BJ (cell line): ENCODE measurements at regions of chr5 and their contacts with region 1.

Region 1: GRCh38 chr5:37667846-37668245 is 172.0 kb downstream of the GDNF start:
- DNase-seq: no peak
- H3K4me3 ChIP-seq: no peak overlapping the region
- H3K27me3 ChIP-seq: no peaks in the 10 kb centered on the region
- CTCF ChIP-seq: no peak

Region 2: GRCh38 chr5:37657046-37657445 is 10.8 kb before region 1 on chr5:
- CTCF ChIA-PET with region 1: no interaction called
- POLR2A ChIA-PET with region 1: no interaction called
- DNase-seq: no peak
- H3K4me3 ChIP-seq: no peak overlapping the region
- H3K27me3 ChIP-seq: no peaks in the 10 kb centered on the region
- CTCF ChIP-seq: no peak

Region 3: DNA sequence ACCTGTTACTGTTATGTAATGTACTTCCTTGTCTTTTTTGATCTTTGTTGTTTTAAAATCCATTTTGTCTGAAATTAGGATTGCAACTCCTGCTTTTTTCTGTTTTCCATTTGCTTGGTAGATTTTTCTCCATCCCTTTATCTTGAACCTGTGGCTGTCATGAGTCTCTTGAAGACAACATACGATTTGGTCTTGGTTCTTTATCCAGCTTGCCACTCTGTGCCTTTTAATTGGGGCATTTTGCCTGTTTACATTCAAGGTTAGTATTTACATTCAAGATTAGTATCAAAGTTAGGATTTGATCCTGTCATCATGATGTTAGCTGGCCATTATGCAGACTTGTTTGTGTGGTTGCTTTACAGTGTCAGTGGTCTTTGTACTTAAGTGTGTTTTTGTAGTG is 15.2 kb after region 1 on chr5:
- CTCF ChIA-PET with region 1: no interaction called
- POLR2A ChIA-PET with region 1: no interaction called
- DNase-seq: no peak
- H3K4me3 ChIP-seq: no peak overlapping the region
- H3K27me3 ChIP-seq: no peaks in the 10 kb centered on the region
- CTCF ChIP-seq: no peak

Region 4: DNA sequence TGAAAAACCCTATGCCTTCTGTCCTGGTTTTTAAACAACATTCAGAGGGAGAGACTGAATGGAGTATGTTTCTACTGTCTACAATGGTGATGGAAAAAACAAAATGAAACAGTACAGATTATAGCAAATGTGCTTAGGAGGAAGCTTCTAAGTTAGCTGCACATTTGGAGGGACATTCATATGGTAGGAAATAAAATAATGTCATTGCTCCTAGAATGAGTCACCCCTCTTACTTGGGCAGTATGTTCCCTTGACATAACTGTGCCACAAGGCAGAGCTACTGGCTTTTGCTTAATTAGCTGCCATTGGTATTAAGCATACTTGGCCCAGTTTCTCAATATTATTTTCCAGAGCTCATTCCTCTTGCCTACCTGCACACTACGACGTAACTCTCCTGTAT is 43.1 kb after region 1 on chr5:
- CTCF ChIA-PET with region 1: no interaction called
- POLR2A ChIA-PET with region 1: no interaction called
- DNase-seq: no peak
- H3K4me3 ChIP-seq: no peak overlapping the region
- H3K27me3 ChIP-seq: no peaks in the 10 kb centered on the region
- CTCF ChIP-seq: no peak

Region 5: DNA sequence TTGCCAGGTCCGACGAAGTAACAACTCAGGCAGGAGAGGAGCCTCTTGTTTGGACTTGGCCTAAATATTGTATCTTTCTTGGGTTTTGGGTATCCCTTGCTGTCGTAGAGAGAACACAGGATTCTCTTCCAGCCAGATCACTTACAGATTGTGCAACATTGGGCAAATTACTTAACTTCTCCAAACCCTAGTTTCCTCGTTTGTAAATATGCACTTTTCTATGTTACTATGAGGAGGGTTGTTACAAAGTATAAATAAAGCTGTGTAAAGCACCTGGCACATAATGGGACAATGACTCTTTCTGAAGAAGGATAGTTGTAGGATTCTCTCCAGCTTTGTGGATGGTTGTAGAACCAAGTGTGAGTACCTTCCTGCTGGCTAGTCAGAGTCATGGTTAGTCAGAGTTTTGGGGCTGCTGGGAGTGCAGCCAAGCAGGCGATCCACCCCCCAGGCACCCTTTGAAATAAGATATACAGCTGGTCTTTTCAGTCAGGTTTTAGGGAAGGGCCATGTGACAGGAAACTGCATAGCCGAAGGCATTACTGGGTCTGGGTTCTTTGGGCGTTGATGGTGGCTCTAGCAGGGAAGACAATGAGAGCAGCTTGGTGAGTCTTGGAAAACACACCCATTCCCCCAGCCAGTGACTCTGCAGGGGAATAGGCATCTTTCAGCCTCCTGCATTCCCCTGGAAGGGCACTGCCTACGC is 221.9 kb after region 1 on chr5:
- CTCF ChIA-PET with region 1: no interaction called
- POLR2A ChIA-PET with region 1: no interaction called
- DNase-seq: peak; percentile 82
- H3K4me3 ChIP-seq: no peak overlapping the region
- H3K27me3 ChIP-seq: no peaks in the 10 kb centered on the region
- CTCF ChIP-seq: no peak

Region 6: DNA sequence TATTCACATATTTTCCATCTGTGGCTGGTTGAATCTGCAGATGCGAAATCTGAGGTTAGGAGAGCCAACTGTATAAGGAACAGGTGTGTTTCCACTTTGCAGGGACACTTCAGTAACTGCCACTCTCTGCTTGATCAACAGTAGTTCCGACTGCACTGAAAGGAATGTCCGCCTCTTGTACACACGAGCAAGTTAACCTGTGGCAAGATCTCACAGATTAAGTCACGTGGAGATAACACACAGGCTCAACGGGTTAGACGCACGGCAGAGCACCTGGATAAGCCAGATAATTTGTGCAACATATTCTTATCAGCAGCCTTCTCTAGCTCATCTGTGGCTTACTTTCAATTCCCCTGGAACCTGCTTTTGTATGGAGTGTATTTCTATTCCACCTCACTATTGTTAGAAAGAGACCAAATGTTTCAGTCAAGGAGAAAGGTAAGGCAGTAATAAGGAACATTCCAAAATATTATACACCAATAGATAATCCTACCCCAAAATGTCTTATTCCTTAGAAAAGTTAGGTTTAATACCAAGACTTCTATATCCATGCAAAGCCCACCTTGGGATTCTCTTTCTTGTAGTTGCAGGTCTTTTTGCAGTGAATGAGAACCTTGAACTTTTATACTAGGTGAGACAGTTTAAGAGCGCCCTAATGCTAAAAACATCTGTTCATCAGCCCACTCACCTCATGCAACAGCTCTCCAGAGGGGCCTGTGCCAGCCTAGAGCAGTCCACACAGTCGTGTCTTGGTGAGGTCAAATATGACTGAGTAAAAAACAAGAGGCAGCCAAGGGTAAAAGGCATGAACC is 1702.9 kb after region 1 on chr5:
- CTCF ChIA-PET with region 1: no interaction called
- POLR2A ChIA-PET with region 1: interaction called, 12 read pairs
- DNase-seq: no peak
- H3K4me3 ChIP-seq: no peak overlapping the region
- H3K27me3 ChIP-seq: no peaks in the 10 kb centered on the region
- CTCF ChIP-seq: no peak